ENCODE measurements at regions of chr2 and their contacts with region 1.

Region 1: GRCh38 chr2:174748948-174749347 is 15.3 kb downstream of the CHRNA1 start:
- DNase-seq: peak; percentile 66
- H3K4me3 ChIP-seq: no peak overlapping the region
- H3K27ac ChIP-seq: no peak overlapping the region
- H3K4me1 ChIP-seq: no peaks in the 10 kb centered on the region
- H3K27me3 ChIP-seq: peaks cover 0 to 2% of the 10 kb centered on the region in 2 experiments
- CTCF ChIP-seq: peak; percentile 67 to 74
- POLR2A ChIP-seq: no peak

Region 2: DNA sequence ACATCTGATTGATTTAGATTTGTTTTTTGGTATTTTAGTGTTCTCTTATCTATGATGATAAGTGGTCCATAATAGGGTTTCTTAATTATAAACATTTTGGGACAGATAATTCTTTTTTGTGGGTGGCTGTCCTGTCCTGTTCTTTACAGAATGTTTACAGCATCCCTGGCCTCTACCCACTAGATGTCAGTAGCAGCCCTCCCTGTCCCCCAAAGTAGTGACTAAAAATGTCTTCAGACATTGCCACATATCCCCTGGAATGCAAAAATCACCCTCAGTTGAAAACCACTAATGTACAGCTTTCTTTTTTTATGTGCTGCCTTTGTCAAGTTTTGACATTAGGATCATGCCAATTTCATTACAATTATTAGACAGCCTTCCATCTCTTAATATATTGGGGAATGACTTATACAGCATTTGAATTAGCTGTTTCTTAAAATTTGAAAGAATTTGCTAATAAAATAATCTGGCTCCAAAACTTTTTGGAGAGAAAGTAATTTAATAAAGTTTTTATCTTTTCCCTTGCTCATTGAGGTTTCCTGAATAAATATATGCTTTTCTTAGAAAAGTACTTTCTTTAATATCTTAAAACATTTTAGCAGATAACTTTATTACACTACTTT is 170.9 kb before region 1 on chr2:
- CTCF ChIA-PET with region 1: no interaction called
- POLR2A ChIA-PET with region 1: no interaction called
- dilution Hi-C with region 1: no loop called
- intact Hi-C with region 1: no loop called
- DNase-seq: peak; percentile 55
- H3K4me3 ChIP-seq: no peak overlapping the region
- H3K27ac ChIP-seq: no peak overlapping the region
- H3K4me1 ChIP-seq: no peaks in the 10 kb centered on the region
- H3K27me3 ChIP-seq: no peaks in the 10 kb centered on the region
- CTCF ChIP-seq: peak; percentile 43 to 56
- POLR2A ChIP-seq: no peak

Region 3: GRCh38 chr2:174729797-174730697 is 18.9 kb before region 1 on chr2:
- CTCF ChIA-PET with region 1: interaction called, 11 read pairs
- POLR2A ChIA-PET with region 1: no interaction called
- dilution Hi-C with region 1: no loop called
- intact Hi-C with region 1: no loop called
- DNase-seq: peak; percentile 28
- H3K4me3 ChIP-seq: peak overlapping the region; percentile 7 to 39 (median 28)
- H3K27ac ChIP-seq: no peak overlapping the region
- H3K4me1 ChIP-seq: peaks cover 8% of the 10 kb centered on the region
- H3K27me3 ChIP-seq: peaks cover 15 to 17% of the 10 kb centered on the region in 2 experiments
- CTCF ChIP-seq: no peak
- POLR2A ChIP-seq: no peak

Region 4: GRCh38 chr2:174764280-174765255 is 15.6 kb after region 1 on chr2 and contains the start of gene CHRNA1:
- CTCF ChIA-PET with region 1: interaction called, 97 read pairs
- POLR2A ChIA-PET with region 1: no interaction called
- dilution Hi-C with region 1: no loop called
- intact Hi-C with region 1: loop called (anchors 2 kb)
- DNase-seq: peak; percentile 49
- H3K4me3 ChIP-seq: no peak within 1 kb of the TSS
- H3K27ac ChIP-seq: peak within 1 kb of the TSS; percentile 86
- H3K4me1 ChIP-seq: peaks cover 23% of the 10 kb centered on the region
- H3K27me3 ChIP-seq: no peaks in the 10 kb centered on the region
- CTCF ChIP-seq: no peak
- POLR2A ChIP-seq: no peak
- total RNA-seq, gene CHRNA1: 8.7 and 11.3 TPM in 2 replicates

Region 5: GRCh38 chr2:174827371-174828369 is 78.7 kb after region 1 on chr2:
- CTCF ChIA-PET with region 1: interaction called, 10 read pairs
- POLR2A ChIA-PET with region 1: no interaction called
- dilution Hi-C with region 1: no loop called
- intact Hi-C with region 1: no loop called
- DNase-seq: peak; percentile 82
- H3K4me3 ChIP-seq: peak overlapping the region in 1 of 3 experiments; percentile 6
- H3K27ac ChIP-seq: peak overlapping the region; percentile 93
- H3K4me1 ChIP-seq: peaks cover 35% of the 10 kb centered on the region
- H3K27me3 ChIP-seq: no peaks in the 10 kb centered on the region
- CTCF ChIP-seq: no peak
- POLR2A ChIP-seq: peak; percentile 53

Region 6: GRCh38 chr2:174971865-174972781 is 223.2 kb after region 1 on chr2:
- CTCF ChIA-PET with region 1: interaction called, 14 read pairs
- POLR2A ChIA-PET with region 1: no interaction called
- dilution Hi-C with region 1: no loop called
- intact Hi-C with region 1: no loop called
- DNase-seq: peak; percentile 96
- H3K4me3 ChIP-seq: peak overlapping the region in 1 of 3 experiments; percentile 34
- H3K27ac ChIP-seq: peak overlapping the region; percentile 93
- H3K4me1 ChIP-seq: peaks cover 34% of the 10 kb centered on the region
- H3K27me3 ChIP-seq: no peaks in the 10 kb centered on the region
- CTCF ChIP-seq: no peak
- POLR2A ChIP-seq: no peak

Region 7: GRCh38 chr2:175004980-175005732 is 256.2 kb after region 1 on chr2 and contains the start of gene CHN1:
- CTCF ChIA-PET with region 1: interaction called, 15 read pairs
- POLR2A ChIA-PET with region 1: no interaction called
- dilution Hi-C with region 1: no loop called
- intact Hi-C with region 1: no loop called
- DNase-seq: peak; percentile 85
- H3K4me3 ChIP-seq: peak within 1 kb of the TSS; percentile 70 to 89 (median 83)
- H3K27ac ChIP-seq: peak within 1 kb of the TSS; percentile 35
- H3K4me1 ChIP-seq: peaks cover 18% of the 10 kb centered on the region
- H3K27me3 ChIP-seq: peaks cover 0 to 3% of the 10 kb centered on the region in 2 experiments
- CTCF ChIP-seq: no peak
- POLR2A ChIP-seq: peak; percentile 71
- total RNA-seq, gene CHN1: 23.3 and 29.0 TPM in 2 replicates